ENCODE measurements at regions of chr6 and their contacts with region 1.

Region 1: DNA sequence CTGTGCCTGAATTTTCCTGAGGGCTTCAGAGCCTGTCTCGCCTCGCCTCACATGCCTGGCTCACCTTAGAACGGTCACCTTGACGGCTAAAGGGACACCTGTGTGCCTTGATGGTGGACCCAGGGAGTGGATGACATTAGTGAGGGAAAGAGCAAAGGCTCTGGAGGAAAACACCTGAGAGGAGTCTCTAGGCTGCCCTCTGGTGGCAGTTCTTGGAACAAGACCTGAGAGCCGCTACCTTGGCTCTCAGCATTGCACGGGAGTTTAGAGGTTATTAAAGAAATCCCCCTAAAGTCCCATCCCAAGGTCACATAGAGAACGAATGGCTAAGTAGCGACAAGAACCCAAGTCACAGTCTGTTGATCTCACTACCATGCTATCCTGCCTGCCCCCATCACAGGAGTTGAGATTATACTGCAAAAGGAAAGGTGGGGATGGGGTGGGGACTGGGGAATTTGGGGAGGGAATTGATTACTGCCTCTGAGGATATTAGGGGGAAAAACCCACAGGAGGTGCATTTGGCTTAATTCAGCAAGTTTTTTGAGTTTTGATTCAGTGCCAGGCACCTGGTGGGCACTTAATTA is 7.9 kb upstream of the CDSN start:
- DNase-seq: peak; percentile 78
- H3K4me3 Mint-ChIP-seq: no peak overlapping the region
- H3K27ac Mint-ChIP-seq: no peak overlapping the region
- H3K4me1 Mint-ChIP-seq: no peaks in the 10 kb centered on the region
- H3K27me3 Mint-ChIP-seq: peaks cover 22% of the 10 kb centered on the region

Region 2: DNA sequence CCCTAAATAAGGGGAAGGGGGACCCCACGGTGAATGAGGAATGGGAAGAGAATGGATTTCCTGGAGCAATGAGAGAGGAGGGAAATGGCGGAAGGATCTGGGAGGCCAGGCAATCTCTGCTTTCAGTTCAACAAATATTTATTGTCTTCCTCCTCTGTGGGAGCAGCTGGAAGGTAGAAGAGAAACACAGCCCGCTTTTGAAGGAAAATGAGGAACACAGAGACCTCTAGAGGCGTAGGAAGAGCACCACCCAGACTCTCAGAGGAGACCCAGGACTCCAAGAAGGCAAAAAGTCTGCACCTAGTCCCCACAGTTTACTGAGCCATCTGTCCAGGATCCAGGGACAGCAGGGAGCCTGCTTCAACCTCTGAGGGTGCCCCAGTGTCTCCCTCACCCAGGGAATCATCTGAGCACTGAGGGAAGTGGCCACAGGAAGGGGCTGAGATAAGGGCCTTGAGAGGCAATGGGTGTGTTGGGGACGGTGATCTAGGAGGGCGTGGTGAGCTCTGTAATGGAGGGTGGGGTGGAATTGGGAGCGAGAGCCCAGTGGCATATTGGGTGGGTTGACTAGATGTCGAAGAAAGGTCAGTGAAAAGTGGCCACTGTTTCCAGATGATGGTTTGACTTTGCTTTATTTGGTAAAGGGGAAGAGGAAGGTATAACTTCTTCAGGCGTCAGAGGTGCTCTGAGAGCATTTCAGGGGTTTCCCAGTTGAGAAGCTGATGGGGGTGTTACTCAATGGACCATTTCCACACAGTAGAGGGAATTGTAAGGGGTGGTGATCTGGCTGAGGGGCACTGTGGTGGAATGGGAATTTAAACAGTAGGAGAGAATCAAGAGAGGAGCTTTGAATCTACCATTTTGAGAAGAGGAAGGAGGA is 13.0 kb before region 1 on chr6:
- CTCF ChIA-PET with region 1: interaction called, 30 read pairs
- POLR2A ChIA-PET with region 1: no interaction called
- DNase-seq: no peak
- H3K4me3 Mint-ChIP-seq: no peak overlapping the region
- H3K27ac Mint-ChIP-seq: no peak overlapping the region
- H3K4me1 Mint-ChIP-seq: no peaks in the 10 kb centered on the region
- H3K27me3 Mint-ChIP-seq: peaks cover 29% of the 10 kb centered on the region